Endothelial cell of umbilical vein (primary cell): ENCODE measurements at regions of chr12 and their contacts with region 1.

Region 1: GRCh38 chr12:60148109-60148508 is 552.3 kb downstream of the SLC16A7 start:
- DNase-seq: peak; percentile 87
- H3K4me3 ChIP-seq: no peak overlapping the region
- H3K27ac ChIP-seq: peak overlapping the region; percentile 68
- H3K4me1 ChIP-seq: peaks cover 16% of the 10 kb centered on the region
- H3K27me3 ChIP-seq: no peaks in the 10 kb centered on the region
- CTCF ChIP-seq: no peak
- POLR2A ChIP-seq: peak; percentile 43

Region 2: GRCh38 chr12:59843313-59843712 is 304.8 kb before region 1 on chr12:
- CTCF ChIA-PET with region 1: no interaction called
- POLR2A ChIA-PET with region 1: no interaction called
- dilution Hi-C with region 1: no loop called
- intact Hi-C with region 1: loop called (anchors 10 kb)
- DNase-seq: no peak
- H3K4me3 ChIP-seq: no peak overlapping the region
- H3K27ac ChIP-seq: no peak overlapping the region
- H3K4me1 ChIP-seq: peaks cover 17% of the 10 kb centered on the region
- H3K27me3 ChIP-seq: no peaks in the 10 kb centered on the region
- CTCF ChIP-seq: no peak
- POLR2A ChIP-seq: no peak

Region 3: DNA sequence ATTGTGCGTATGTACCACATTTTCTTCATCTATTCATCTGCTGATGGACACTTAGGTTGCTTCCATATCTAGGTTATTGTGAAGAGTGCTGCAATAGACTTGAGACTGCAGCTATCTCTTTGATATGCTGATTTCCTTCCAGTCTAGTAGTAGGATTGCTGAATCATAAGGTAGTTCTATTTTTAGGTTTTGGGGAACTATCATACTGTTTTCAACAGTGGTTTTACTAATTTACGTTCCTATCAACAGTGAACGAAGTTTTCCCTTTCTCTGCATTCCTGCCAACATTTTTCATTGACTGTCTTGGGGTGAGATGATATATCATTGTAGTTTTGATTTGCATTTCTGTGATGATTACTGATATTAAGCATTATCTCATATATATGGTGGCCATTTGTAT is 70.1 kb before region 1 on chr12:
- CTCF ChIA-PET with region 1: no interaction called
- POLR2A ChIA-PET with region 1: no interaction called
- dilution Hi-C with region 1: no loop called
- intact Hi-C with region 1: loop called (anchors 5 kb)
- DNase-seq: no peak
- H3K4me3 ChIP-seq: no peak overlapping the region
- H3K27ac ChIP-seq: no peak overlapping the region
- H3K4me1 ChIP-seq: peaks cover 14% of the 10 kb centered on the region
- H3K27me3 ChIP-seq: no peaks in the 10 kb centered on the region
- CTCF ChIP-seq: no peak
- POLR2A ChIP-seq: no peak

Region 4: GRCh38 chr12:60106214-60106613 is 41.9 kb before region 1 on chr12:
- CTCF ChIA-PET with region 1: no interaction called
- POLR2A ChIA-PET with region 1: no interaction called
- dilution Hi-C with region 1: no loop called
- intact Hi-C with region 1: no loop called
- DNase-seq: peak; percentile 41
- H3K4me3 ChIP-seq: no peak overlapping the region
- H3K27ac ChIP-seq: no peak overlapping the region
- H3K4me1 ChIP-seq: no peaks in the 10 kb centered on the region
- H3K27me3 ChIP-seq: no peaks in the 10 kb centered on the region
- CTCF ChIP-seq: peak in 1 of 2 donors; percentile 12
- POLR2A ChIP-seq: no peak

Region 5: GRCh38 chr12:60644076-60644475 is 496.0 kb after region 1 on chr12:
- CTCF ChIA-PET with region 1: no interaction called
- POLR2A ChIA-PET with region 1: no interaction called
- dilution Hi-C with region 1: no loop called
- intact Hi-C with region 1: no loop called
- DNase-seq: no peak
- H3K4me3 ChIP-seq: no peak overlapping the region
- H3K27ac ChIP-seq: no peak overlapping the region
- H3K4me1 ChIP-seq: no peaks in the 10 kb centered on the region
- H3K27me3 ChIP-seq: no peaks in the 10 kb centered on the region
- CTCF ChIP-seq: no peak
- POLR2A ChIP-seq: no peak